HCT116 (cell line): ENCODE measurements at regions of chr10 and their contacts with region 1.

Region 1: DNA sequence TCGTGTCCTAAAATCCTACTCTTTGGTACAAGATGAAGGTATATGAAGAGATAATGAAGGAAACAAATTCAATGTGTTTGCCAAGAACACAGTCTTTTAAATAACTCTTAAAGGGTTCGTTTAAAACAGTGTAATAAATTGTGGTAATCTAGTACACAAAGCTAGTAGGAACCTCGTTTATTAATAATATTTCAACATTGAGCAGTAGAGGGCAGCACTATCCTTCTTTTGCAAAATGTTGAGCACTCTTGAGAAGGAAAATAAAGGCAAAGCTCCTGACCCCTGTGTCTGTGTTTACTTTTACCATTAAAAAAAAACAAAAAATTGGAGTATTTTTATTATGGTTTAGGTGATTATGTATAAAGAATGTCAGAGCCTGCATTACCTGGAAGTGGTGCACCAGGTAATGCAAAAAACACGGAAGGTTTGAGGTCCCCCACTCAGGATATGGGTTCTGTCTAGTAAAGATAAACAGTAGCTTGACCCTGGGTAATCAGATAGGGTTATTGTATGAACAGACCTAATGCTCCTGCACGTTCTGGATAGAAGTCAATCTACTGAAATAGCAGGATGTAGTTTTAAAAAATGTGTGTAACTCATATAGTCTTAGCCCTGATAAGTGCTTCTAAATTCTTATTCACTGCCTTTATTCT is 5.7 kb upstream of the GOT1 start:
- DNase-seq: peak; percentile 44
- ATAC-seq: peak; percentile 58
- H3K4me3 ChIP-seq: no peak overlapping the region
- H3K27ac ChIP-seq: no peak overlapping the region
- H3K4me1 ChIP-seq: peaks cover 5 to 14% of the 10 kb centered on the region in 2 experiments; a peak in 3 of 4 replicates
- H3K27me3 ChIP-seq: no peaks in the 10 kb centered on the region
- CTCF ChIP-seq: peak; percentile 42 to 80 (median 75); a peak in 4 of 6 replicates
- POLR2A ChIP-seq: no peak
- RAD21 ChIP-seq: peak; percentile 75

Region 2: DNA sequence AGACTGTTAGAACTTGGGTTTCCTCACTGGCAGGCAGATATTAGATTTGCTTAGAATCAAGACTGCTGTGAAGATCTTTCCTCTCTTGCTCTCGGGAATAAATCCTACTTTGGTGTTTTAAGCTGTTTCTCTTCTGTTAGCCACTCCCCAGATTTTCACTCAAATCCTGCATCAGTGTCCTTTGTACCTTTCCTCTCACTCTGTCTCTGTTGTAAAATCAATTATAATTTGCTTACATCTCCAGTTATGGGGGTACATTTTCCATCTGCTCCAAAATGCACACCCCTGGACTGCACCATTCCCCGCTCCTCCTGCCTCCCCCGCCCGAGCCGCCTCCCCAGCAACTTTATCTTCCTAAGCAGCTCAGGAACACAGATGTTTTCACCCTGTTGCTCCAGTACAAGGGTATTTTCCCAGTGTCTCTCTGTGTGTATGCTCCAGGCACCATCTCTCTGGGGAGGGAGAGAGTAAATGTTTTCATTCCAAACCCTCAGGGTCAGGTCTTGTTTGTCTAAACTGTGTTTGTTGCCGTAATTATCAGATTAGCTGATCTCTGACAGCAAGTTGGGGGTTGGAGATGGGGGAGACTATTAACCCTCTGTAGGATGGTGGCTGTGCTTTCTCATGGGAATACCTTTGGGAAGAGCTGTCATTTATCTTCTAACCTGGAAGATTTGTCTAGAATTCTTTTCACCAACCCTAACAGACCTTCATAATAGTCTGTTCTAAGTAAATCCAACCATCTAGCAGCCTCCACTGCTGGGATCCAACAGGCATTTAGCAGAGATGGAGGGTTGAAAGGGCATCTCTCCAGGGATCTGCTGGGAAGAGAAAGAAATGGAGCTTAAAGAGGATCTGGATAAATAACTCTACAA is 14.7 kb after region 1 on chr10:
- CTCF ChIA-PET with region 1: interaction called, 22 read pairs
- POLR2A ChIA-PET with region 1: interaction called, 13 read pairs
- RAD21 ChIA-PET with region 1: no interaction called
- intact Hi-C with region 1: no loop called
- DNase-seq: no peak
- ATAC-seq: no peak
- H3K4me3 ChIP-seq: no peak overlapping the region
- H3K27ac ChIP-seq: no peak overlapping the region
- H3K4me1 ChIP-seq: no peaks in the 10 kb centered on the region
- H3K27me3 ChIP-seq: peaks cover 80% of the 10 kb centered on the region
- CTCF ChIP-seq: no peak
- POLR2A ChIP-seq: no peak
- RAD21 ChIP-seq: no peak

Region 3: GRCh38 chr10:99484603-99485581 is 48.8 kb after region 1 on chr10:
- CTCF ChIA-PET with region 1: interaction called, 12 read pairs
- POLR2A ChIA-PET with region 1: interaction called, 3 read pairs
- RAD21 ChIA-PET with region 1: interaction called in 1 of 2 experiments, 5 read pairs
- intact Hi-C with region 1: no loop called
- DNase-seq: no peak
- ATAC-seq: peak; percentile 90
- H3K4me3 ChIP-seq: no peak overlapping the region
- H3K27ac ChIP-seq: no peak overlapping the region
- H3K4me1 ChIP-seq: peaks cover 0 to 8% of the 10 kb centered on the region in 2 experiments; a peak in 1 of 4 replicates
- H3K27me3 ChIP-seq: peaks cover 27% of the 10 kb centered on the region
- CTCF ChIP-seq: peak; percentile 79 to 87 (median 84)
- POLR2A ChIP-seq: no peak
- RAD21 ChIP-seq: peak; percentile 79

Region 4: GRCh38 chr10:99560277-99561126 is 124.4 kb after region 1 on chr10:
- CTCF ChIA-PET with region 1: interaction called, 19 read pairs
- POLR2A ChIA-PET with region 1: no interaction called
- RAD21 ChIA-PET with region 1: no interaction called
- intact Hi-C with region 1: no loop called
- DNase-seq: peak; percentile 61
- ATAC-seq: peak; percentile 94
- H3K4me3 ChIP-seq: no peak overlapping the region
- H3K27ac ChIP-seq: no peak overlapping the region
- H3K4me1 ChIP-seq: peaks cover 0 to 4% of the 10 kb centered on the region in 2 experiments; a peak in 1 of 4 replicates
- H3K27me3 ChIP-seq: no peaks in the 10 kb centered on the region; the same call in 1 of the 2 replicates
- CTCF ChIP-seq: peak; percentile 81 to 99 (median 92)
- POLR2A ChIP-seq: no peak
- RAD21 ChIP-seq: peak; percentile 94

Region 5: DNA sequence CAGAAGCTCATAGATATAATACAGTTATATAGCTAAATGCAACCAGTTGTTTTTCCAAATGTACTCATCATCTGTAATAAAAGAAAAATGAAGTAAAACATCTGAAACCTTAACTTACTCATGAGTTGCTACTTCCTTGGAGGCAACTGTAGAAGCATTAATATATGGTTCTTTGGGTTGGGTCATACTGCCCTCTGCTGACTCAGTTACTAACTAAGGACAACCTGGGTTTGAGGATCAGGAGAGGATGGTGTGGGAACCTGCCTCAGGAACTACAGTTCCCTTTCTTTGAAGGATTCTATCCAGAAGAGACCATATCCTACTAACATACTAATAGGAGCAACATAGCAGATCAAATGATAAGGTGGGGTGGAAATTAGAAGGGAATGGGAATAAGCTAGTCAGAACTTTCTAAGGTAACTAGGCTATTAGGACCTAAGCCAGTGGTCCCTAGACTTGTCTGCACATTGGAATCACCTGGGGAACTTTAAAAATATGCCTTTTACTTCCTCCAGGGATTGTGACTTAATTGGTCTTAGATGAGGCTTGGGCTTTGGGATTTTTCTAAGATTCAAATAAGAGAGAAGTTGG is 275.1 kb after region 1 on chr10:
- CTCF ChIA-PET with region 1: interaction called, 12 read pairs
- POLR2A ChIA-PET with region 1: no interaction called
- RAD21 ChIA-PET with region 1: no interaction called
- intact Hi-C with region 1: loop called (anchors 2 kb)
- DNase-seq: peak; percentile 54
- ATAC-seq: peak; percentile 94
- H3K4me3 ChIP-seq: no peak overlapping the region
- H3K27ac ChIP-seq: no peak overlapping the region
- H3K4me1 ChIP-seq: no peaks in the 10 kb centered on the region
- H3K27me3 ChIP-seq: no peaks in the 10 kb centered on the region
- CTCF ChIP-seq: peak; percentile 72 to 84 (median 79)
- POLR2A ChIP-seq: no peak
- RAD21 ChIP-seq: peak; percentile 88

Region 6: DNA sequence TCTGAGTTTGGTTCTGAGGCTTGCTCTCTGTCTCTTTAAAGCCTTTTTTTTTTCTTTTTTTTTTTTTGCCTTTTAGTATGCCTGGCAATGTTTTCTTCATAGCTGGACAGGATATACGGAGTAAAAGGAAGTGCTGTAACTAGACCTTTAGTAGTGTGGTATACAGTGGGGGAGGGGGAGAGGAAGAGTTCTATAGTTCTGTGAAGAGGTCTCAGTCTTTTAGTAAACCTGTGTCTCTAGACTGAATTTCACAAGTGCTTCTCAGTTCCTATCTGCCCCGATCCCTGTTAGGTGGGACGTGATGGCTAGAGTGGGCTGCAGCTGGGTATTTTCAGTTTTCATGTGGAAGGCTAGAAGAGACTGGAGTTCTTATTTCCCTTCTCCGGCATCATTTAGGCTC is 343.2 kb after region 1 on chr10:
- CTCF ChIA-PET with region 1: no interaction called
- POLR2A ChIA-PET with region 1: no interaction called
- RAD21 ChIA-PET with region 1: no interaction called
- intact Hi-C with region 1: no loop called
- DNase-seq: no peak
- ATAC-seq: peak; percentile 35
- H3K4me3 ChIP-seq: peak overlapping the region; percentile 36 to 53
- H3K27ac ChIP-seq: peak overlapping the region; percentile 100
- H3K4me1 ChIP-seq: peaks cover 89 to 97% of the 10 kb centered on the region in 2 experiments
- H3K27me3 ChIP-seq: no peaks in the 10 kb centered on the region
- CTCF ChIP-seq: no peak
- POLR2A ChIP-seq: no peak
- RAD21 ChIP-seq: no peak

Region 7: GRCh38 chr10:99834410-99834809 is 398.3 kb after region 1 on chr10:
- CTCF ChIA-PET with region 1: no interaction called
- POLR2A ChIA-PET with region 1: no interaction called
- RAD21 ChIA-PET with region 1: no interaction called
- intact Hi-C with region 1: no loop called
- DNase-seq: peak; percentile 12
- ATAC-seq: peak; percentile 56; the same call in 1 of the 2 replicates
- H3K4me3 ChIP-seq: no peak overlapping the region
- H3K27ac ChIP-seq: no peak overlapping the region
- H3K4me1 ChIP-seq: peaks cover 0 to 9% of the 10 kb centered on the region in 2 experiments; a peak in 2 of 4 replicates
- H3K27me3 ChIP-seq: no peaks in the 10 kb centered on the region
- CTCF ChIP-seq: no peak
- POLR2A ChIP-seq: no peak
- RAD21 ChIP-seq: no peak